Panc1 (cell line): ENCODE measurements at regions of chr17 and their contacts with region 1.

Region 1: GRCh38 chr17:47315451-47316266 is 8.1 kb upstream of the EFCAB13 start:
- DNase-seq: peak; percentile 56
- ATAC-seq: peak; percentile 84
- H3K4me3 ChIP-seq: no peak overlapping the region
- H3K27ac ChIP-seq: peak overlapping the region; percentile 73; the same call in 1 of the 2 replicates
- H3K4me1 ChIP-seq: peaks cover 10% of the 10 kb centered on the region
- H3K27me3 ChIP-seq: no peaks in the 10 kb centered on the region
- CTCF ChIP-seq: peak; percentile 68; the same call in 1 of the 2 replicates

Region 2: GRCh38 chr17:47095268-47095667 is 220.4 kb before region 1 on chr17:
- CTCF ChIA-PET with region 1: no interaction called
- POLR2A ChIA-PET with region 1: no interaction called
- in situ Hi-C with region 1: no loop called
- intact Hi-C with region 1: no loop called
- DNase-seq: no peak
- ATAC-seq: no peak
- H3K4me3 ChIP-seq: no peak overlapping the region
- H3K27ac ChIP-seq: no peak overlapping the region
- H3K4me1 ChIP-seq: no peaks in the 10 kb centered on the region
- H3K27me3 ChIP-seq: no peaks in the 10 kb centered on the region
- CTCF ChIP-seq: no peak

Region 3: GRCh38 chr17:47229535-47230443 is 85.9 kb before region 1 on chr17:
- CTCF ChIA-PET with region 1: no interaction called
- POLR2A ChIA-PET with region 1: no interaction called
- in situ Hi-C with region 1: no loop called
- intact Hi-C with region 1: loop called (anchors 2 kb)
- DNase-seq: peak; percentile 91
- ATAC-seq: peak; percentile 95
- H3K4me3 ChIP-seq: peak overlapping the region; percentile 12 to 41; a peak in 3 of 4 replicates
- H3K27ac ChIP-seq: peak overlapping the region; percentile 70
- H3K4me1 ChIP-seq: peaks cover 10% of the 10 kb centered on the region
- H3K27me3 ChIP-seq: no peaks in the 10 kb centered on the region
- CTCF ChIP-seq: peak; percentile 97

Region 4: GRCh38 chr17:47338026-47338425 is 22.4 kb after region 1 on chr17:
- CTCF ChIA-PET with region 1: no interaction called
- POLR2A ChIA-PET with region 1: no interaction called
- in situ Hi-C with region 1: no loop called
- intact Hi-C with region 1: no loop called
- DNase-seq: no peak
- ATAC-seq: no peak
- H3K4me3 ChIP-seq: no peak overlapping the region
- H3K27ac ChIP-seq: no peak overlapping the region
- H3K4me1 ChIP-seq: no peaks in the 10 kb centered on the region
- H3K27me3 ChIP-seq: no peaks in the 10 kb centered on the region
- CTCF ChIP-seq: no peak